ENCODE measurements at regions of chr20 and their contacts with region 1.

Region 1: DNA sequence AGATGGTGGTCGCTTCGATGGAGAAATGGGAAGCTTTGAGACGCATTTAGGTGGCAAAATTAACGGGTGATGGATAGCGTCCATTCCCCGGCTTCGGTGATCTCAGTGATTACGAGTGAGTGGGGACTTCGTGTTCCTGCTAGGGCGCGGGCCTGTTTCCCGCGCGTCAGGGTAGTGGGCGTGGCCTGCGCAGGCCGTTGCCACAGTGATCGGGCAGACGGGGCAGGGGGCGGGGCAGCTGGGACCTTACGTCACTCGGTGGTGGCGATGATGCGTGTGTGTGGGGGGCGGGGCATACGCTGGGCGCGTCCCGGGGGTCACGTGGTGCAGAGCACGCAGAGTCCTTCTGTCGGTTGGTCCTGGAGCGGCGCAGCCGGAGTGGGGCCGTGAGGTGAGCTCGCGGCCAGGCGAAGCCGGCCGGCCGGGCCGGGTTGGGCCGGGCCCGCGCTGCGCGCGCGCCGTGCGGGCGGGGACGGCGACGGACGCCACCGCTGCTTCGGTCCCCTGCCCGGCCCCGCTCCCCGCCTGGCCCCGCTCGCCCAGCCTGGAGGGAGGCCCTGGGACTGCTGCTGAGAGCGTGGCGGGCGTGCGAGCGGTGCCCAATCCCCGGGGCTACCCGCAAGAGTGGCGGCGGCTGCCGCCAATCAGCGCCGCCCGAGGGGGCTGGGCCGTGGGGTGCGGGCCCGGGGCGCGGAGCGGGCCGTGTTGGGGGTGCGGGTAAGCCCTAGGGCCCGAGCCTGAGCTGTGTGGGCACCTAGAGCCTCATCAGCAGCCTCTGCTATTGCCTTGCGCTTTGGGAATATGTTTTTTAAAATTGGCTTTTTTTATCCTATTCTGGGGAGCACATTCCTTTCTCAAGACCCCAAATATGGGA is at the start of gene PHF20:
- DNase-seq: peak; percentile 93
- ATAC-seq: peak; percentile 97
- H3K4me3 ChIP-seq: peak within 1 kb of the TSS; percentile 76 to 85 (median 81)
- H3K27ac ChIP-seq: peak within 1 kb of the TSS; percentile 46
- H3K4me1 ChIP-seq: peaks cover 68% of the 10 kb centered on the region
- H3K27me3 ChIP-seq: no peaks in the 10 kb centered on the region; a peak in 1 of 5 replicates
- CTCF ChIP-seq: 0 out of 2 replicates have a peak, but pooled peaks have one; percentile 16
- EP300 ChIP-seq: no peak
- POLR2A ChIP-seq: peak; percentile 86 to 89
- RAD21 ChIP-seq: peak; percentile 79; the same call in 1 of the 2 replicates
- total RNA-seq, gene PHF20: 34.1 and 43.3 TPM in 2 replicates

Region 2: DNA sequence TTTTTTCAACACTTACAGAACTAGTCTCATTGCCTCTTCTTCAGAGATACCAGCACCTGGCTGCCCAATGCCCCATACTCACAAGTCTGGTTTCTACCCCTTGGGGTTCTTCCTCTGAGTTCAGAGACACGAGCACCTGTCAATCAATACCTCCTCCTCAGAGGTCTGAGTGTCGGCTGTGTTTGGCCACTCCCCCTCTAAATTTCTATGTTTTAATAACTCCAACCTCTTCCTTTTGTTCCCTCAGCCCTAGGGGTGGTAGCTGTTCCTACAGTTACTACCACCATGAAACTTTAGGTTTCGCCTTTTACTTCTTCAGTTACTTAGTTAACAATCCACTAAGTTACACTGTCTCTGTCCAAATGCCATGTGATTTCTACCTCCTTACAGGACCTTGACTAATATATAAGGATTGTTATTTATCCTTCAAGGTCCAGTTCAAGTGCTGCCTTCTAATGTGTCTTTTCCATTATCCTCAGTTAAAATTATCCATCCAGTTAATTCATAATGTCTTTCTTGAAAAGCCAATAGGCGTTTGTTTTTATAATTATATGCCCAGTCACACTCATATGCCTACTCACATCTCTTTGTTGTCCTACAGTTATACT is 14.7 kb before region 1 on chr20:
- CTCF ChIA-PET with region 1: no interaction called
- POLR2A ChIA-PET with region 1: interaction called, 25 read pairs
- in situ Hi-C with region 1: no loop called
- intact Hi-C with region 1: loop called (anchors 2 kb)
- DNase-seq: no peak
- ATAC-seq: peak; percentile 14; the same call in 2 of the 3 replicates
- H3K4me3 ChIP-seq: no peak overlapping the region
- H3K27ac ChIP-seq: no peak overlapping the region
- H3K4me1 ChIP-seq: peaks cover 24% of the 10 kb centered on the region
- H3K27me3 ChIP-seq: peaks cover 0 to 9% of the 10 kb centered on the region in 2 experiments; a peak in 1 of 5 replicates
- CTCF ChIP-seq: no peak
- EP300 ChIP-seq: no peak
- POLR2A ChIP-seq: no peak
- RAD21 ChIP-seq: no peak

Region 3: GRCh38 chr20:35791821-35792220 is 19.9 kb after region 1 on chr20:
- CTCF ChIA-PET with region 1: no interaction called
- POLR2A ChIA-PET with region 1: interaction called, 10 read pairs
- in situ Hi-C with region 1: no loop called
- intact Hi-C with region 1: no loop called
- DNase-seq: no peak
- ATAC-seq: no peak
- H3K4me3 ChIP-seq: no peak overlapping the region
- H3K27ac ChIP-seq: no peak overlapping the region
- H3K4me1 ChIP-seq: peaks cover 6% of the 10 kb centered on the region; the same call in 1 of the 2 replicates
- H3K27me3 ChIP-seq: no peaks in the 10 kb centered on the region
- CTCF ChIP-seq: no peak
- EP300 ChIP-seq: no peak
- POLR2A ChIP-seq: no peak
- RAD21 ChIP-seq: no peak